ENCODE measurements at regions of chr14 and their contacts with region 1.

Region 1: GRCh38 chr14:55780156-55780946 is 200.3 kb downstream of the KTN1 start:
- DNase-seq: peak; percentile 77 to 91
- H3K4me3 ChIP-seq: no peak overlapping the region
- H3K27ac ChIP-seq: peak overlapping the region; percentile 64
- H3K4me1 ChIP-seq: peaks cover 24% of the 10 kb centered on the region
- H3K27me3 ChIP-seq: no peaks in the 10 kb centered on the region
- CTCF ChIP-seq: no peak

Region 2: GRCh38 chr14:55752586-55753390 is 27.6 kb before region 1 on chr14:
- CTCF ChIA-PET with region 1: no interaction called
- POLR2A ChIA-PET with region 1: no interaction called
- intact Hi-C with region 1: loop called (anchors 1 kb)
- DNase-seq: peak; percentile 71 to 95
- H3K4me3 ChIP-seq: no peak overlapping the region
- H3K27ac ChIP-seq: peak overlapping the region; percentile 25
- H3K4me1 ChIP-seq: peaks cover 61% of the 10 kb centered on the region
- H3K27me3 ChIP-seq: no peaks in the 10 kb centered on the region
- CTCF ChIP-seq: no peak

Region 3: GRCh38 chr14:55807059-55807499 is 26.7 kb after region 1 on chr14:
- CTCF ChIA-PET with region 1: no interaction called
- POLR2A ChIA-PET with region 1: no interaction called
- intact Hi-C with region 1: loop called (anchors 1 kb)
- DNase-seq: peak; percentile 49 to 83
- H3K4me3 ChIP-seq: no peak overlapping the region
- H3K27ac ChIP-seq: no peak overlapping the region
- H3K4me1 ChIP-seq: peaks cover 23% of the 10 kb centered on the region
- H3K27me3 ChIP-seq: no peaks in the 10 kb centered on the region
- CTCF ChIP-seq: no peak

Region 4: GRCh38 chr14:56172571-56172971 is 392.2 kb after region 1 on chr14:
- CTCF ChIA-PET with region 1: no interaction called
- POLR2A ChIA-PET with region 1: interaction called, 10 read pairs
- intact Hi-C with region 1: no loop called
- DNase-seq: peak in 1 of 2 experiments; percentile 37
- H3K4me3 ChIP-seq: no peak overlapping the region
- H3K27ac ChIP-seq: no peak overlapping the region
- H3K4me1 ChIP-seq: peaks cover 12% of the 10 kb centered on the region; the same call in 1 of the 2 replicates
- H3K27me3 ChIP-seq: no peaks in the 10 kb centered on the region
- CTCF ChIP-seq: no peak

Region 5: GRCh38 chr14:56358851-56359614 is 578.7 kb after region 1 on chr14:
- CTCF ChIA-PET with region 1: no interaction called
- POLR2A ChIA-PET with region 1: no interaction called
- intact Hi-C with region 1: no loop called
- DNase-seq: no peak
- H3K4me3 ChIP-seq: no peak overlapping the region
- H3K27ac ChIP-seq: no peak overlapping the region
- H3K4me1 ChIP-seq: no peaks in the 10 kb centered on the region
- H3K27me3 ChIP-seq: no peaks in the 10 kb centered on the region
- CTCF ChIP-seq: no peak

Measured in PC-9 (cell line).